Mammary epithelial cell (primary cell): ENCODE measurements at regions of chr18 and their contacts with region 1.

Region 1: DNA sequence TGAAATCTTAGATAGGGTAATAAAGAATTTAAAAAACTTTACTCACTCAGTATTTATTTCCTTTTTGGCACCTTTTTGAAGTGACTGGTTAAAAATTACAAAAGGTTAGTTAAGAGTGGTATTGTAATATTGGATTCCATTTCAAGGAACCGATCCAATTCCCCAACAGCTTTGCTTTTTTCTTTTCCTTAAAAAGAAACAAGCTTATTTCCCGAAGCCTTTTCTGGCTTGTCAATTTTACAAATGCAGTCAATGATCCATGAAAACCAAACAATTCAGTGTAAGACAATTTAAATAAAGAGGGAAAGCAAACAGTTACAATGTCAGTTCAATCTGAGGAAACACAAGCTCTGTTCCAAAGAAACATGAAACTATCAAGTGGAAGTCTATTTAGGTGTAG is 200.2 kb downstream of the RIT2 start:
- DNase-seq: no peak
- H3K4me3 ChIP-seq: no peak overlapping the region
- H3K27ac ChIP-seq: no peak overlapping the region
- H3K4me1 ChIP-seq: no peaks in the 10 kb centered on the region
- H3K27me3 ChIP-seq: no peaks in the 10 kb centered on the region
- CTCF ChIP-seq: no peak

Region 2: GRCh38 chr18:42801706-42802105 is 113.6 kb before region 1 on chr18:
- CTCF ChIA-PET with region 1: no interaction called
- dilution Hi-C with region 1: no loop called
- in situ Hi-C with region 1: loop called in 1 of 2 experiments (anchors 25 kb)
- intact Hi-C with region 1: no loop called
- DNase-seq: no peak
- H3K4me3 ChIP-seq: no peak overlapping the region
- H3K27ac ChIP-seq: no peak overlapping the region
- H3K4me1 ChIP-seq: no peaks in the 10 kb centered on the region
- H3K27me3 ChIP-seq: no peaks in the 10 kb centered on the region
- CTCF ChIP-seq: no peak

Region 3: GRCh38 chr18:43034683-43035505 is 119.6 kb after region 1 on chr18:
- CTCF ChIA-PET with region 1: no interaction called
- dilution Hi-C with region 1: no loop called
- in situ Hi-C with region 1: no loop called
- intact Hi-C with region 1: no loop called
- DNase-seq: no peak
- H3K4me3 ChIP-seq: no peak overlapping the region
- H3K27ac ChIP-seq: no peak overlapping the region
- H3K4me1 ChIP-seq: no peaks in the 10 kb centered on the region
- H3K27me3 ChIP-seq: no peaks in the 10 kb centered on the region
- CTCF ChIP-seq: no peak